Esophagus muscularis mucosa (tissue), 4 donors: ENCODE measurements at regions of chr20 and their contacts with region 1.

Region 1: DNA sequence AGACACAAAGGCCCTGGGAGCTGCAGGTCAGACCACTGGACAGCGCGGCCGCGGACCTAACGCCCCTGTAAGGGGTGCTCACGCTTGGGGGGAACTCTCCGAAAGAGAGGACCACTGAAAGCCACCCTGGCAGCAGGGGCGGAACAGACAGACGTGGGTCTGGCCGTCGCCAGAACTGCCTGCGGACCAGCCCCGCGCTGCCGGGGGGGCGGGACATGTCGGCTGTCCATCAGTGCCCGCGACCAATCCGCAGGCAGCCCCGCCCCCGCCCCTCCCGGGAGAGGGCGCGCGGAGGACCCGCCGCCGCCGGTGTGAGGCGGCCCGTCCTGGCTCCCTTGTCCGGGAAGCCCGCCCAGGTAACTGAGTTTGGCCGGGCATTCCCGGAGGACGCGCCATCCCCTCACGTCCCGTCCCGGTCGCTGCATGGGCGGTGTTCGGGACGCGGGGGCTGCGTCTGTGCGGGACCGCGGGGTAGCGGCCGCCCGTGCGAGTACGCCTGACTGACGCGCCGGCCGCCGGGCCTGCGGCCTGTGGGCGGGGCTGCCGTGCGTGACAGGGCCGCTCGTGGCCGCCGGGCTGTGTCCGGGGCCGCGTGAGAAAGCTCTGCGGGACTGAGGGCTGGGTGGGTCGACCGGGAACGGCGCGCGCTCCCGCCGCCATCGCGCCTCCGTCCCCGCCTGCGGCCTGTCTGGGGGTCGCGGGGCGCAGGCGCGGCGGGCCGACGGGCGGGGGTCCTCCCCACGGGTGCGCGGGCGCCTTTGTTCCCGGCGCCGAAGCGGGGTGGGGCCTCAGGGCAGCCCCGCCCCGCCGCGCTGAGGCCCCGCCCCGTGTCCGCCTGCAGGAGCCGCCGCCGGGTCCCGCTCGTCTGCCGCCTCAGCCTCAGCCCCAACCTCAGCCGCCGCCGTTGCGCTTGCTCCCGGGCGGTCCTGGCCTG is at the start of gene PLCG1:
- DNase-seq: peak; percentile 95
- H3K4me3 ChIP-seq: peak within 1 kb of the TSS; percentile 79 to 93 (median 90)
- H3K27ac ChIP-seq: peak within 1 kb of the TSS; percentile 95 to 97 (median 96)
- H3K4me1 ChIP-seq: peaks cover 35 to 61% (median 57%) of the 10 kb centered on the region in 4 donors
- H3K27me3 ChIP-seq: no peaks in the 10 kb centered on the region
- CTCF ChIP-seq: no peak
- EP300 ChIP-seq: no peak
- POLR2A ChIP-seq: peak; percentile 61
- total RNA-seq, gene PLCG1: 68.4 to 119 (median 82.5) TPM

Region 2: GRCh38 chr20:40843251-40843650 is 293.7 kb before region 1 on chr20:
- intact Hi-C with region 1: no loop called
- DNase-seq: no peak
- H3K4me3 ChIP-seq: no peak overlapping the region
- H3K27ac ChIP-seq: no peak overlapping the region
- H3K4me1 ChIP-seq: no peaks in the 10 kb centered on the region
- H3K27me3 ChIP-seq: peaks cover 0 to 24% (median 0%) of the 10 kb centered on the region in 4 donors
- CTCF ChIP-seq: no peak
- EP300 ChIP-seq: no peak
- POLR2A ChIP-seq: no peak

Region 3: DNA sequence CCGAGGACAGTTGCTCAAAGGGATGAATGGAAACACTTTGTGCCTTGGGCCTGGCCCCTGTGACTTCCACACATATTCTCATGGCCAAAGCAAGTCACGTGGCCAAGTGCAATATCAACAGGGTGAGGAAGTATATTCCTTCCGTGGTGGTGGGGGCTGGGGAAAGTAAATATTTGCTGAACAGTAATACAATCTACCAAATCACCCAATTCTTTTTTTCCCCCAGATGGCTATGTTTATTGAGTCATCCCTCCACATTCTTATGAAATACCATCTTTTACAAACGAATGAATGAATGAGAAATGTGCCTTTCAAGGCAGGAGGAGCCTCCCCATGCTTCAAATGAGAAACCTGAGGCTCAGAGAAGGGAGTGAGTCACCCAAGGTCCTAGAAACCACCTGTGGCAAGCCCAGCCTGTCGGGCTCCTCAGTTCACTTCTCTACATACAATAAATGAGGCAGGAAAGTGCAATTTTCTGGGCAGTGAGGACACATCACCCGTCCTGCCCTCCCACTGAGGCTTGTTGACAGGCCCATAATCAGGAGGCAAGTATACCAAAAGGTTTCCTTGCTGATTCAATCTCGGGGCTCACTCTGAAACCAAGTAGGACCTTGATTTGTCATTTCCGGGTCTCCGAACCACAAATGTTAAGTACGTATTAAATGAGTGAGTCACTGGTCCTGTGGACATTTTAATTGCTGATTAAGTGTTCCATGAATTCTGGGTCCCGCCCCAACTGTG is 133.6 kb before region 1 on chr20:
- intact Hi-C with region 1: no loop called
- DNase-seq: no peak
- H3K4me3 ChIP-seq: peak overlapping the region in 1 of 4 donors; percentile 32
- H3K27ac ChIP-seq: peak overlapping the region; percentile 52 to 73 (median 71)
- H3K4me1 ChIP-seq: peaks cover 28 to 48% (median 37%) of the 10 kb centered on the region in 4 donors
- H3K27me3 ChIP-seq: no peaks in the 10 kb centered on the region
- CTCF ChIP-seq: no peak
- EP300 ChIP-seq: no peak
- POLR2A ChIP-seq: no peak

Region 4: GRCh38 chr20:41173161-41173721 is 36.3 kb after region 1 on chr20:
- intact Hi-C with region 1: loop called (anchors 5 kb)
- DNase-seq: peak; percentile 98
- H3K4me3 ChIP-seq: no peak overlapping the region
- H3K27ac ChIP-seq: peak overlapping the region; percentile 77 to 85 (median 81)
- H3K4me1 ChIP-seq: peaks cover 68 to 74% (median 70%) of the 10 kb centered on the region in 4 donors
- H3K27me3 ChIP-seq: no peaks in the 10 kb centered on the region
- CTCF ChIP-seq: peak; percentile 98
- EP300 ChIP-seq: no peak
- POLR2A ChIP-seq: no peak

Region 5: GRCh38 chr20:41408156-41408794 is 271.3 kb after region 1 on chr20:
- intact Hi-C with region 1: loop called (anchors 10 kb)
- DNase-seq: no peak
- H3K4me3 ChIP-seq: no peak overlapping the region
- H3K27ac ChIP-seq: no peak overlapping the region
- H3K4me1 ChIP-seq: peaks cover 26 to 41% (median 34%) of the 10 kb centered on the region in 4 donors
- H3K27me3 ChIP-seq: no peaks in the 10 kb centered on the region
- CTCF ChIP-seq: no peak
- EP300 ChIP-seq: no peak
- POLR2A ChIP-seq: no peak